A673 (cell line): ENCODE measurements at regions of chr4 and their contacts with region 1.

Region 1: DNA sequence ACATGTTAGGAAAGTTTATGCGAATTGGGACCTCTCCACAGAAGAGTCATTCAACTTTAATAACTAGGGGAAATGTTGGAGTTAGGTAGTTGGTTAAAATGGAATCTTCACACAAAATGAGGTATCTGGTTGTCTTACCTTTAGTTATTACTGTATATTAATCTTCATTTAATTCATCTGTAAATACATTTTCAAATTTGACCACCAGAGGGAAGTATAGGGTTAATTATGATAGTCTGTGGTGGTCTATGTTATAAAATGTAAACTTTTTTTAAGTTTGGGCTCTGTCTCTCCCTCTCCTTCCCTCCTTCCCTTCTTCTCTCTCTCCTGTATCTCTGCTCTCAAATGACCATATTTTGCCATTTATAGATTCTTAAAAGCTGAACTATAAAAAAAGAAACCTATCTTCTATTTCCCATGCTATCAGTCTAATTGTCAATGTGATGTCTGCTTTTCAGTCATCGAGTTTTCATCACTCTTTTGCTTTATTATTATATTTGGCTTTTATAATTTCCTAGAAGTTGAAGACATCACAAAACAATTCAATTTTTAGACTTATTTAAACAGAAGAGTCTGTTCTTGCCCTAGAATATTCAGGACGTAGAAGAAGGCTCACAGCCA is 49.8 kb downstream of the TMEM144 start:
- DNase-seq: peak; percentile 71
- H3K4me3 ChIP-seq: no peak overlapping the region
- H3K27ac ChIP-seq: no peak overlapping the region
- H3K4me1 ChIP-seq: no peaks in the 10 kb centered on the region
- H3K27me3 ChIP-seq: no peaks in the 10 kb centered on the region
- CTCF ChIP-seq: peak; percentile 63

Region 2: DNA sequence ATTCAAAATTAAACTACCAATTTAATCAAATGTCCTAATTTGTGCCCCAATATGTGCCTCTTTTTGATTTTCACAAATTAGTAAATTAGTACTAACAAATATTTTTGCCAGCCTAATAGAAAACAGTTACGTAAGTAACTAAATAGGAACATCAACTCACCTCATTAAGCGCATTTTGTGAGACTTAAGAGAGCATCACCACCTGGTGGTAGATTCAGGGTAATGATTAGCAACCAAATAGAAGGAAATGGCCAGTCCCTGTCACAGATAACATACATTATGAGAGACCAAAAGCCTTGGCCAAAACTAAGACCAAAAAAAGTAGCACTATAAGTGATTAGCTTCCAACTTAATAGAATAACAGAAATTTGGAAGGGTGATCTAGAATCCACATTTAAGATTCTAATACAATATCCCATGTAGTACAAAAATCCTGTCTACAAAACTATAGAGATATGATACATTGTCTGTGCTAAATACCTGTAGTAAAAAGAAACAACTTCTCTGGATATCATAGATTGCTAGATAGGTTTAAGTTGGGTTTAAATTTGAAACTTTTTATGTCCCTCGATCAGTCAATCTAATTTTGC is 364.9 kb after region 1 on chr4:
- CTCF ChIA-PET with region 1: no interaction called
- POLR2A ChIA-PET with region 1: no interaction called
- intact Hi-C with region 1: loop called (anchors 1 kb)
- DNase-seq: peak; percentile 74
- H3K4me3 ChIP-seq: no peak overlapping the region
- H3K27ac ChIP-seq: no peak overlapping the region
- H3K4me1 ChIP-seq: no peaks in the 10 kb centered on the region
- H3K27me3 ChIP-seq: peaks cover 17% of the 10 kb centered on the region
- CTCF ChIP-seq: peak; percentile 86

Region 3: DNA sequence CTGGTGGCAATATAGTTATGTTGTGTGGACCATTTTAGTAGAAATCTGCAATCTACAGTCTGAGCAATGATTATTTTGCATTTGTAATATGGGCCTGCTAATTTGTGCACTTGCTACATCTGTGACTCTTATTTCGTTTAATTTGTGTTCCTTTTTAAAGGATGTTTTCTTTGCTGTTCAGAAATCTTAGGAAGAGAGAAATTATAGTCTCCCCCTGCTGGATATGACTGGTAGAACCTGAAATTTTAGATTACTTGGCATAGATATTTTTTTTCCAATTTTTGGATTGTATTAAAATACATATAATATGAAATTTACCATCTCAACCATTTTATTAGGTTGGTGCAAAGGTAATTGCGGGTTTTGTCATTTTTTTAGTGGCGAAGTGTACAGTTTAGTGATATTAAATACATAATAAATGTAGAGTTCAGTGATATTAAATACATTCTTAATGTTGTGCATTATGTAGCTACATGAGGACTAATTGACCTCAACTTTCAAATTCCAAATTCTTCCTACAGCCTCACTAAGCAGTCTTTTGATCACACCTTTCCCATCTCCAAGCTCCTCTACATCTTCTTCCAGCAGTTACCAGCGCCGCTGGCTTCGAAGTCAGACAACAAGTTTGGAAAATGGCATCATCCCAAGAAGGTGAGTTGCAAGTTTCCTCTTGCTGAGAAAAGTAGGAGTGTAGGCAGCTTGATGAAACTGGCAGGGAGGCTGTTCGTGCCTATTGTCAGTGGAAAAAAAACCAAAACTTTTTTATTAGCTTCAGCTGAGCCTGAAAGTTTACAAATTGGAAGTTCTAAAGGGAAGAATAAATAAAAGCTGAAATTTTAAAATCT is 591.0 kb after region 1 on chr4:
- CTCF ChIA-PET with region 1: no interaction called
- POLR2A ChIA-PET with region 1: no interaction called
- intact Hi-C with region 1: loop called (anchors 5 kb)
- DNase-seq: peak; percentile 56
- H3K4me3 ChIP-seq: no peak overlapping the region
- H3K27ac ChIP-seq: no peak overlapping the region
- H3K4me1 ChIP-seq: no peaks in the 10 kb centered on the region
- H3K27me3 ChIP-seq: no peaks in the 10 kb centered on the region
- CTCF ChIP-seq: peak; percentile 87